PC-3 (cell line): ENCODE measurements at regions of chrX and their contacts with region 1.

Region 1: DNA sequence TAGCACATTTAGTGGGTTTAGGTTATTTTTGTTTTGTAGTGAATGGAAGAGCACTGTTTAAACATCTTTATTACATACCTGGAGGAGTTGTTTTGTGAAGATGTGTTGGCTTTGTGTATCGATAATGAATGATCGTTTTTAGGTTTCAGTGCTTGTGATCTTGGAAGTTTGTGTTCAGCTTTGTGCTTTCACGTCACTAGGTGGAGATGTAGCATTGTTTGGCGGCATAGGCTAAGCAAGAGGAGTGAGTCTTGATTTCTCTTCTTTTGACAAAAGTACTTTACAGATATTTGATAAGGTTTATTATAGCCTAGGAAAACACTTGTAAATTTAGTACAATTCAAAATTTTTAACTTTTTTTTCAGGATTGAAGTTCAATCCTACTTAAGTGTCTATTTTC is 50.4 kb downstream of the PDK3 start:
- DNase-seq: no peak
- ATAC-seq: no peak
- H3K4me3 ChIP-seq: no peak overlapping the region
- H3K27ac ChIP-seq: no peak overlapping the region
- H3K4me1 ChIP-seq: no peaks in the 10 kb centered on the region
- H3K27me3 ChIP-seq: no peaks in the 10 kb centered on the region
- CTCF ChIP-seq: peak; percentile 44

Region 2: GRCh38 chrX:24357106-24357505 is 158.3 kb before region 1 on chrX:
- CTCF ChIA-PET with region 1: no interaction called
- POLR2A ChIA-PET with region 1: no interaction called
- intact Hi-C with region 1: no loop called
- DNase-seq: no peak
- ATAC-seq: no peak
- H3K4me3 ChIP-seq: no peak overlapping the region
- H3K27ac ChIP-seq: no peak overlapping the region
- H3K4me1 ChIP-seq: no peaks in the 10 kb centered on the region
- H3K27me3 ChIP-seq: no peaks in the 10 kb centered on the region
- CTCF ChIP-seq: no peak

Region 3: GRCh38 chrX:24732766-24733500 is 217.5 kb after region 1 on chrX:
- CTCF ChIA-PET with region 1: no interaction called
- POLR2A ChIA-PET with region 1: no interaction called
- intact Hi-C with region 1: loop called (anchors 5 kb)
- DNase-seq: peak; percentile 66
- ATAC-seq: peak; percentile 77
- H3K4me3 ChIP-seq: no peak overlapping the region
- H3K27ac ChIP-seq: peak overlapping the region; percentile 11; the same call in 1 of the 2 replicates
- H3K4me1 ChIP-seq: peaks cover 10% of the 10 kb centered on the region
- H3K27me3 ChIP-seq: no peaks in the 10 kb centered on the region
- CTCF ChIP-seq: no peak